A673 (cell line): ENCODE measurements at regions of chr5 and their contacts with region 1.

Region 1: GRCh38 chr5:57298295-57298984 is 124.6 kb downstream of the GPBP1 start:
- DNase-seq: peak; percentile 84
- H3K4me3 ChIP-seq: no peak overlapping the region
- H3K27ac ChIP-seq: no peak overlapping the region
- H3K4me1 ChIP-seq: peaks cover 6% of the 10 kb centered on the region
- H3K27me3 ChIP-seq: no peaks in the 10 kb centered on the region
- CTCF ChIP-seq: peak; percentile 79

Region 2: GRCh38 chr5:57499262-57500050 is 201.0 kb after region 1 on chr5:
- CTCF ChIA-PET with region 1: interaction called, 3 read pairs
- POLR2A ChIA-PET with region 1: no interaction called
- intact Hi-C with region 1: loop called (anchors 5 kb)
- DNase-seq: peak; percentile 59
- H3K4me3 ChIP-seq: peak overlapping the region; percentile 19
- H3K27ac ChIP-seq: no peak overlapping the region
- H3K4me1 ChIP-seq: peaks cover 20% of the 10 kb centered on the region
- H3K27me3 ChIP-seq: no peaks in the 10 kb centered on the region
- CTCF ChIP-seq: peak; percentile 76

Region 3: GRCh38 chr5:57650360-57651069 is 352.1 kb after region 1 on chr5:
- CTCF ChIA-PET with region 1: interaction called, 4 read pairs
- POLR2A ChIA-PET with region 1: no interaction called
- intact Hi-C with region 1: loop called (anchors 5 kb)
- DNase-seq: peak; percentile 61
- H3K4me3 ChIP-seq: no peak overlapping the region
- H3K27ac ChIP-seq: no peak overlapping the region
- H3K4me1 ChIP-seq: no peaks in the 10 kb centered on the region
- H3K27me3 ChIP-seq: no peaks in the 10 kb centered on the region
- CTCF ChIP-seq: peak; percentile 81